Heart right ventricle (tissue), 16 donors: ENCODE measurements at regions of chr11 and their contacts with region 1.

Region 1: GRCh38 chr11:58719406-58720117 is 12.2 kb downstream of the GLYAT start:
- DNase-seq: no peak
- ATAC-seq: no peak
- H3K4me3 ChIP-seq: no peak overlapping the region
- H3K27ac ChIP-seq: no peak overlapping the region
- H3K4me1 ChIP-seq: no peaks in the 10 kb centered on the region
- H3K27me3 ChIP-seq: no peaks in the 10 kb centered on the region
- CTCF ChIP-seq: no peak

Region 2: DNA sequence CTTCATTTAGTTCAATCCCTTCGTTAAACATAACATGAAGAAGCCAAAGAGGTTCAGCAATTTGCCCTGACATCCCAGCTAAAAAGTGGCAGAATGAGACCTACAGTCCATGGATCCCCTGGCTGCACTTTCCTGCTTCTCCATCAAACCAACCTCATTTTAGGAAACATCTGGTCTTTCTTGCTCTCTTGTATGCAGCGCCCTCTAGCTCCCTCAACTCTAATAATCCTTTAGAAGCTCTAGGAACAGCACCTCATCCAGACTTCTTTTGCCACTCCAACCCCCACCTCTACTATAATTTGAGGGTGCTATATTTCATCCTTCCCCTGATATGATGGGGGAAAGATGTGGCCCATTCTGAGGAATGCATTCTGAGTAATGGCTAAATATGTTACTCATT is 89.7 kb before region 1 on chr11:
- intact Hi-C with region 1: no loop called
- DNase-seq: peak in 1 of 2 donors; percentile 39
- ATAC-seq: peak in 3 of 8 donors; percentile 41 to 59 (median 42)
- H3K4me3 ChIP-seq: no peak overlapping the region
- H3K27ac ChIP-seq: no peak overlapping the region
- H3K4me1 ChIP-seq: peaks cover 0 to 26% (median 11%) of the 10 kb centered on the region in 9 donors
- H3K27me3 ChIP-seq: no peaks in the 10 kb centered on the region
- CTCF ChIP-seq: peak in 8 of 9 donors; percentile 28 to 65 (median 56)

Region 3: DNA sequence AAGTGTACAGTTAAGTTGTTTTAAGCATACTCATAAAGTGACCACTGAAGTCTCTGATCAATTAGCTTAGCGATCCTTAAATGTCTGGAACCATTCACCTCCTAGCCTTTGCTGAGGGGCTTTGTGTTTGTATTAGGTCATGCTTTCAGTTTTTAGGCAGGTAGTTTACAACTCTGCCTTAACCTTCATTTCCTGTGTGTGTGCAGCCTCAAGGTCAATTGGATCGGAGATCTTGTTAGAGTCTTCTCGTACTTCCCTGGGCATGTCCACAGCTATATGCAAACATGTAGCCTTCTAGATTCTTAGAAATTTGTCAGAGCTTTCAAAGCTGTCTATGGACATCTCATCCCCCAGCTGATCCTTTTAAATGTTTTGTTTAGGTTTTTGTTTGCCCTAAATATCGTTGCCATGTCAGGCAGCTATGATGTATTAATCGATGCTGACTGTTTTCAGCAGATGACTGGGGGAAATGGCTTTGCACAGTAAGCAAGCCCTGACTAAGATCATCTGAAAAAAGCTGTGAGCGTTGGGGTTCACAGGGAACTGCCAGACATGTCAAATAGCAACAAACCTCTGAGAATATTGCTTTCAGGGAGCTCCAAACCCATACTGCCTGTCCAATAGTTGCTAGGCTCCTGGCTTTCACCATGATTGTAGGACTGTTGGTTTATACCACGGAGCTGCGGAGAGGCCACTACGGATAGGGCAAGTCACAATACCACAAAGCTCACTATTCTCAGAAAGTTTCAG is 33.4 kb before region 1 on chr11:
- intact Hi-C with region 1: loop called in 1 of 10 experiments (anchors 1 kb)
- DNase-seq: no peak
- ATAC-seq: no peak
- H3K4me3 ChIP-seq: no peak overlapping the region
- H3K27ac ChIP-seq: no peak overlapping the region
- H3K4me1 ChIP-seq: no peaks in the 10 kb centered on the region
- H3K27me3 ChIP-seq: peaks cover 0 to 10% (median 0%) of the 10 kb centered on the region in 7 donors
- CTCF ChIP-seq: no peak

Region 4: GRCh38 chr11:58762284-58763119 is 42.9 kb after region 1 on chr11:
- intact Hi-C with region 1: loop called in 1 of 10 experiments (anchors 10 kb)
- DNase-seq: no peak
- ATAC-seq: no peak
- H3K4me3 ChIP-seq: no peak overlapping the region
- H3K27ac ChIP-seq: no peak overlapping the region
- H3K4me1 ChIP-seq: no peaks in the 10 kb centered on the region
- H3K27me3 ChIP-seq: no peaks in the 10 kb centered on the region
- CTCF ChIP-seq: no peak